Sigmoid colon (tissue), 7 donors: ENCODE measurements at regions of chr14 and their contacts with region 1.

Region 1: DNA sequence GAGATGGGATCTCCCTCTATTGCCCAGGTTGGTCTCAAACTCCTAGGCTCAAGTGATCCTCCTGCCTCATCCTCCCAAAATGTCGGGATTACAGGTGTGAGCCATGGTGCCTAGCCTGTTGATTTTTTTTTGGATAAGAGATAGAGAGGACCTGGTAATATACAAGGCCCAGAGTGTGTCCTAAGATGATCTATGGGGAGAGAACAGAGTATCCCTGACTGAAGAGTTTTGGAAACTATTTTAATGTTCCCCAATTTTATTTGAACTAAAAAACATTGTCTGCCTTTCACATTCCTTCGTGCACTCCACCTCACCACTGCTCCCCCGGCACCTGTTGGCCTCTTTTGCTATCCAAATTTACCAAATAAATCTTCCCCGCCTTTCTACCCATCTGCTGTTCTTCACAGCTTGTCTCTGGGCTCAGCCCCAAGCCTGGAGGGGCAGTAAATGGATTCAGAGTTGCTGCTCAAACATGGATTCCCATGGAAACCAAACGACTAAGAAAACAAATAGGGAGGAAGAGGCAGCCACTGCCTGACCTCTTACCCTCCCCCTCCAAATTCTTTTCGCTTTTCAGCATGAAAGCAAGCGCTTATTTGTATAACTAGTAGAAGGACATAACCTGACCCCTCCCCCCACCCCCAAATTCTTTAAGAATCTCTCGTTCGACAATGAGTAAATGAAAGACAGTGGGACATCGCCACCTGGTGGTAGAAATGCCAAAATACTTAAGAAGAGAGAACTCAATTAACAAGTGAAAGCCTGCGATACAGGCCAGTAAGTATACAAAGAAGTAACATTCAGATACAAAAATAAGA is 22.6 kb downstream of the OR10G3 start:
- DNase-seq: peak; percentile 87
- H3K4me3 ChIP-seq: peak overlapping the region in 3 of 4 donors; percentile 31 to 46 (median 41)
- H3K27ac ChIP-seq: peak overlapping the region; percentile 71 to 81 (median 81)
- H3K4me1 ChIP-seq: peaks cover 0 to 13% (median 10%) of the 10 kb centered on the region in 4 donors
- H3K27me3 ChIP-seq: no peaks in the 10 kb centered on the region
- CTCF ChIP-seq: peak; percentile 68 to 77 (median 72)
- EP300 ChIP-seq: no peak
- POLR2A ChIP-seq: no peak

Region 2: GRCh38 chr14:21308479-21309237 is 248.6 kb before region 1 on chr14:
- intact Hi-C with region 1: no loop called
- DNase-seq: peak; percentile 77
- H3K4me3 ChIP-seq: peak overlapping the region in 3 of 4 donors; percentile 21 to 33 (median 28)
- H3K27ac ChIP-seq: peak overlapping the region in 1 of 4 donors; percentile 40
- H3K4me1 ChIP-seq: peaks cover 0 to 4% (median 0%) of the 10 kb centered on the region in 4 donors
- H3K27me3 ChIP-seq: peaks cover 0 to 16% (median 0%) of the 10 kb centered on the region in 3 donors
- CTCF ChIP-seq: no peak
- EP300 ChIP-seq: no peak
- POLR2A ChIP-seq: no peak

Region 3: DNA sequence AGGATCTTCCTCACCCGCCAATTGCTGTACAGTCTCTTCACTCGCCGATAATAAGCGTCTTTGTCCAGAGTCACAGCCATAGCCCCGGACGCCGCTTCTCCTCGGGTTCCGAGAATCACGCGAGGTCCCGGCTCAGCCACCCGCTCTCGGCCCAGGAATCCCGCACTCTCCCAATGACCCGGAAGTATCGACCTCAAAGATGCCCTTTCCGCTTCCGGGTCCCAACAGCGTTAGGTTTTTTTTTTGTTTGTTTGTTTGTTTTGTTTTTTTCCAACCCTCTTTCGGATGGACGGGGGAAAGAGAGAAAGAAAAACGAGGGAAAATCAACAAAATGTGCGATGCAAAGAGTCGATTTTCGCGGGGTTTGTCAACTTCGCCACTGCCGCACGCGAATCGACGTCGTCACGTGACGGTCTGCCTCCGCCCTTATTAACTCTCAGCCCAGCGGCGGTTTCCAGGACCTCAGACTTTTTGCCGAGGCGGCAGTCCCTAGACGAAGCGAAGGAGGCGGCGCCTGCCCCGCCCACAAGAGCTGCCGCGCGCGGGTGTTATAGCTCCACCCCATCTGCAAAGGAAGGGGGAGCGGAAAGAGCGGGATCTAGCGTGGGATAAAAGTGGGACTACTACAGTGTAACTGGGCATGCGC is 173.3 kb before region 1 on chr14 and contains the start of gene SUPT16H:
- intact Hi-C with region 1: loop called (anchors 10 kb)
- DNase-seq: peak; percentile 98
- H3K4me3 ChIP-seq: peak within 1 kb of the TSS; percentile 61 to 88 (median 72)
- H3K27ac ChIP-seq: peak within 1 kb of the TSS; percentile 87 to 95 (median 90)
- H3K4me1 ChIP-seq: peaks cover 0 to 26% (median 16%) of the 10 kb centered on the region in 4 donors
- H3K27me3 ChIP-seq: no peaks in the 10 kb centered on the region
- CTCF ChIP-seq: no peak
- EP300 ChIP-seq: no peak
- POLR2A ChIP-seq: peak in 1 of 2 donors; percentile 54
- total RNA-seq, gene SUPT16H: 62.0 to 77.1 (median 69.1) TPM

Region 4: DNA sequence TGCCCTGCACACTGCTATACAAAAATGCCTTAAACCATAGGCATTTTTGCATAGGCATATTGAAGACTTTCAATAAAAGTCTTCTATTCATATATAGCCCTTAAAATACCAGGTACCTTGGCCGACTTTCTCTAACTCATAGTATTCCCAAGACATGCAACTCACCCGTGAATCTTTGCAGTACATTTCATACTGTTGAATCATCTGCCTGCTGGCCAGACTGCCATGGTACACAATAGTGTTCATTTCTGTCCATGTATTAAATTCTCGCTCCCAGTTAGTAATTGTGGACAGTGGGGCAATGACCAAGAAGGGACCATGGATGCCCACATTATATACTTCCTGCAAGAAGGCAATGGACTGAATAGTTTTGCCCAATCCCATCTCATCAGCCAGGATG is 149.1 kb before region 1 on chr14:
- intact Hi-C with region 1: no loop called
- DNase-seq: no peak
- H3K4me3 ChIP-seq: no peak overlapping the region
- H3K27ac ChIP-seq: no peak overlapping the region
- H3K4me1 ChIP-seq: no peaks in the 10 kb centered on the region
- H3K27me3 ChIP-seq: no peaks in the 10 kb centered on the region
- CTCF ChIP-seq: no peak
- EP300 ChIP-seq: no peak
- POLR2A ChIP-seq: no peak

Region 5: GRCh38 chr14:21437063-21437901 is 120.0 kb before region 1 on chr14:
- intact Hi-C with region 1: loop called (anchors 5 kb)
- DNase-seq: peak; percentile 98
- H3K4me3 ChIP-seq: peak overlapping the region; percentile 52 to 89 (median 77)
- H3K27ac ChIP-seq: peak overlapping the region; percentile 85 to 90 (median 86)
- H3K4me1 ChIP-seq: peaks cover 0 to 27% (median 22%) of the 10 kb centered on the region in 4 donors
- H3K27me3 ChIP-seq: no peaks in the 10 kb centered on the region
- CTCF ChIP-seq: no peak
- EP300 ChIP-seq: no peak
- POLR2A ChIP-seq: peak in 1 of 2 donors; percentile 11

Region 6: DNA sequence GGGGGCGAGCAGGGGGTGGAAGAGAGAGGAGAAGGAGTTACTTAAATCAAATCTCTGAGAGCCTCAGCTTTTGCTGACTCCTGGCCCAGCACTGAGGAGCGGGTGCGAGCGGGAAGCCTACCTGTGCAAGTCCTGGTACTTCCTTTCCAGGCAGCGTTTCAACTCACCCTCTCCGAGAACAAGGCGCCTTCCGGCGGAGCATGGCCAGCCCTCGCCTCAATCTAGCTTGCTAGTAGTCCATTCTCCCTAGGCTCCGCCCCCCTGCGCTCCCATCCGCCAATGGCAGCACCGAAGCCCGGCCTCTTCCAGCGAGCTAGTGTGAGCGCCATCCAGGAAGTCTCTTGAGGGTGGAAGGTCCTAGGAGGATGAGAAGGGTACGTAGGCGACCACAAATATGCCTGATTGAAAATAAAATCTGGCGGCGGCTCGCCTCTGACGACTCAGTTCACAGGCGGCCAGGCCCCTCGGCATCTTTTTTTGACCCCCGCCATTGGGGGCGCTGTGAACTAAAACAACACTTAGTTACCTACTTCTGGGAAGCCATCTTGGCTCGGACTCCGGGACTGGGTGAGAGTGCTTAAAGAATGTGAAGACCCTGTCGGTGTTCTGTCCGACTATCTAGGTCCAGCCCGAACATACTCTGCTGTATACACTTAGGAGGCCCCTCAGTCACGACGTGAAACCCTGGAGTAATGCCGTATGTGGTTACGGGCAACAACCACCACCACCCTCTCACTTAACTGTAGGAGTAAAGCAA is 101.2 kb before region 1 on chr14 and contains the start of gene CHD8:
- intact Hi-C with region 1: loop called (anchors 1 kb)
- DNase-seq: peak; percentile 100
- H3K4me3 ChIP-seq: peak within 1 kb of the TSS; percentile 74 to 89 (median 86)
- H3K27ac ChIP-seq: peak within 1 kb of the TSS; percentile 87 to 97 (median 92)
- H3K4me1 ChIP-seq: peaks cover 0 to 26% (median 25%) of the 10 kb centered on the region in 4 donors
- H3K27me3 ChIP-seq: no peaks in the 10 kb centered on the region
- CTCF ChIP-seq: peak in 2 of 4 experiments; percentile 23 to 37
- EP300 ChIP-seq: no peak
- POLR2A ChIP-seq: peak in 1 of 2 donors; percentile 49
- total RNA-seq, gene CHD8: 36.0 to 53.5 (median 44.8) TPM

Region 7: DNA sequence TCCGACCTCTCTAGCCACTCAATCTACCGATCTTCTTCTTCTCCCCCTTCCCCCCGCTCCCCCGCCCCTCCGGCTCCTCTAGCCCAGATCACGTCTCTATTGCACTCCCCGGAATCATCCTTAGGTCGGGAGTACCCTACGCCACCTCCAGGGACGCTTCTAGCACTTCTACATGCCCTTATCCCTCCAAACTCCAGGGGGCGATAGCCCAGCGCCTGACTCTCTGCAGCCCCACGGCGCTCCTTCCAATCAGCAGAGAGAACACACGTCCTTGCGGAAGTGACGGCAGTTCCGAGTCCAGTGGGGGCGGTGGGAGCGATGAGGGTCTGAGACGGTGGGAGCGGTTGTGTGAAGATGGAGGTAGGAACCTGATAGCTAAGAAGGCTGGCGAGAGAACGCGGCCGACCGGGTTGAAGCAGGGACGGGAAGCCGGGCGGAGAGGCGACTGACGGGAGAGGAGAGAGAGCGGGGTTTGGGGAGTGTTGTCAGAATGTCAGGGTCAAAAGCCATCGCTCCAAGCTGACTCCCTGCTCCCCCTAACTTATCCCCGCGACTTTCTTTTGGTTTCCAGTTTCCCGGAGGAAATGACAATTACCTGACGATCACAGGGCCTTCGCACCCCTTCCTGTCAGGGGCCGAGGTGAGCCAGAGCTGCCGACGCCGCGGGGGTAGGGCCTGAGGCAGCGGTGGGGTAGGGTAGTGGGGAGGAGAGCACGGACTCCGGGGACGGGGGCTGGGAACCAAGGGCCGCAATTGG is 80.2 kb before region 1 on chr14 and contains the starts of genes RAB2B and TOX4:
- intact Hi-C with region 1: loop called (anchors 5 kb)
- DNase-seq: peak; percentile 98
- H3K4me3 ChIP-seq: peak within 1 kb of the TSS; percentile 68 to 86 (median 72)
- H3K27ac ChIP-seq: peak within 1 kb of the TSS; percentile 84 to 90 (median 86)
- H3K4me1 ChIP-seq: peaks cover 0 to 27% (median 23%) of the 10 kb centered on the region in 4 donors
- H3K27me3 ChIP-seq: no peaks in the 10 kb centered on the region
- CTCF ChIP-seq: peak; percentile 96 to 100 (median 100)
- EP300 ChIP-seq: no peak
- POLR2A ChIP-seq: peak; percentile 82 to 85
- total RNA-seq, gene RAB2B: 22.7 to 28.5 (median 26.9) TPM
- total RNA-seq, gene TOX4: 40.0 to 71.8 (median 48.5) TPM

Region 8: DNA sequence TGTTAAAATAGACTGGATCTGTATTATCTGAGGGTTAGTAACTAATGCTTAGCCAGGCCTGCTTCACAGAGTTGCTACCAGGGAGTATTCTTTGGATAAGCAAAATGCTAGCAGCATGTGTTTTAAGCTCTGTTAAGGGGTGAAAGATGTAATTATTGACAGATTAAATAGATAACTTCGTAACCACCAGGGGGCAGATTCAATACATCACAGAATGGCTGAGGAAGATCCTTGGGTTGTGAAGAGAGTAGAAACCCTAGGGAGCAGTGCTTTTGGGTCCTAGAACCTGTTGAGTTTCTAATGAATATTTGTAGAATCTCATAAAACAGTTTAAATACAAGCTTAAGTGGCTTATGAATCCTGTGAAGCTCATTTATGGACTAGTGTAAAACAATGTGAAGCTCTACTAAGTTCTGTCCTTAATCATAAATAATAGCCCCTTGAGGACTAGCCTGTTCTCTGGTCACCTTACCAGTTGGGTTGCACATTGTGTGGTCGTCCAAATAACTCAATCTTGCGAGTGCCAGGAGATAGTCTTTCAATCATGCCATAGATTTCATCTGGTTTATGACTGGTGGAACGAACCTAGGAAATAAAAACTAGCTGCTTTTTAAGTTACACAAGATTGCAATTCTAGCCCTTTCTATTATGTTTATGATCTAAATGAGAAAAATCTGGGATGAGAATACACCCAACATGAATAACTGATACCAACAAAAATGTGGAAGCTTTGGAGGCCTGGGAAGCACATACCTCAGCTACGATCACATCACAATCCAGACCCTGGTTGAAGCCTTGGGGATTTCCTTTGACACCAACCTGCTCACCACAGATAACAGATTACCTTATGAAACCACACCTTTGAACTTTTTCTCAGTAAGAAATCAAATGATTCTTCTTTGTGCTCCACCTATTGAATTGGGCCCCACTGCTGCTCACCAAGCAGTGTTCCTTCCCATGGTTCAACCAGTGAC is 58.5 kb before region 1 on chr14:
- intact Hi-C with region 1: loop called (anchors 1 kb)
- DNase-seq: no peak
- H3K4me3 ChIP-seq: no peak overlapping the region
- H3K27ac ChIP-seq: peak overlapping the region in 1 of 4 donors; percentile 23
- H3K4me1 ChIP-seq: peaks cover 0 to 7% (median 3%) of the 10 kb centered on the region in 4 donors
- H3K27me3 ChIP-seq: no peaks in the 10 kb centered on the region
- CTCF ChIP-seq: peak; percentile 25 to 45 (median 37)
- EP300 ChIP-seq: no peak
- POLR2A ChIP-seq: no peak

Region 9: DNA sequence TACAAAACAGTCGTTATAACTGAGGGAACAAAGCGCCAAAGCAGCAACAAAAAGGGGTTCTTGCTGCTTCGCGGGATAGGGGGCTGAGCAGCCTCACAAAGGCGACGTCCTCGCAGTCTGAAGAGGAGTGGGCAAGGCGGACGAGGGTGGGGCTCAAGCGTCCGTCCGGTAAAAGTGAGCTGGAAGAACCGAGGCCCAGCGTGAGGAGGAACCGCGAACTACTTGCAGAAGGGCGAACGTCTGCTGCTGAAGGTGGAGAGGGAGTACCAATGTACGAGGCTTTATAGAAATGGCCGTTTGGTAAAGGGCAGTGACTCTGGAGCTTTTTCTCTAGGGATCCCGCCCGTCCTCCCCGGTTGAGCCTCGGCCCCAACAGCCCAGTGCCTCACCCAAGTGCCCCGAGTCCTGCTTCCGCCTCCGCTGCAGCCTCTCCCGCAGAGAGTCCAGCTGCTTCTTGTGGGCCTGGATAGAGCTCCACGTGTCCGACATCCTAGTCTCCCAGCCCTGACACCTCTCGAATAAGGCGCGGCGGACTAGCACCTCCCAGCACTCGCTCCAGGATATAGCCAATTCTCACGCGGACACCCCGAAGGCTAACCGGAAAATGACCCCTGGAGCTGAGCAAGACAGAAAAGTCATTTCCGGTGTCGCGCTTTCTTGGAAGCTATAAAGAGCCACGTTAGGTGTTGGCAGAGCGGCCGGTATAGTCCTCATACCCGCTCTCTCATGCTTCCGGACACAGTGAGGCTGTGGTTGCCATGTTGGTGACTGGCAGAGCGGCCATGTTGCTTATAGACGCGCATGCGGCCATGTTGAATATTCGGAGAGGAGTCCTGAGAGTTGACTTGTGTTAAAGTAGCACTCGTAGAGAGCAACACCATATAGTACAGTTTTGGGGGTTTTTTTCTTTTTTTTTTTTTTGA is 46.3 kb before region 1 on chr14 and contains the start of gene METTL3:
- intact Hi-C with region 1: loop called (anchors 5 kb)
- DNase-seq: peak; percentile 99
- H3K4me3 ChIP-seq: peak within 1 kb of the TSS; percentile 54 to 77 (median 72)
- H3K27ac ChIP-seq: peak within 1 kb of the TSS; percentile 81 to 85 (median 84)
- H3K4me1 ChIP-seq: peaks cover 0 to 24% (median 20%) of the 10 kb centered on the region in 4 donors
- H3K27me3 ChIP-seq: no peaks in the 10 kb centered on the region
- CTCF ChIP-seq: no peak
- EP300 ChIP-seq: no peak
- POLR2A ChIP-seq: no peak
- total RNA-seq, gene METTL3: 60.9 to 84.9 (median 75.4) TPM